ENCODE measurements at regions of chr10 and their contacts with region 1.

Region 1: GRCh38 chr10:89563861-89564478 is 28.6 kb upstream of the SLC16A12 start:
- DNase-seq: no peak
- H3K4me3 ChIP-seq: no peak overlapping the region
- H3K27ac ChIP-seq: no peak overlapping the region
- H3K4me1 ChIP-seq: no peaks in the 10 kb centered on the region
- H3K27me3 ChIP-seq: no peaks in the 10 kb centered on the region
- CTCF ChIP-seq: peak; percentile 78 to 82

Region 2: GRCh38 chr10:89426230-89426868 is 137.6 kb before region 1 on chr10:
- intact Hi-C with region 1: loop called (anchors 1 kb)
- DNase-seq: no peak
- H3K4me3 ChIP-seq: no peak overlapping the region
- H3K27ac ChIP-seq: no peak overlapping the region
- H3K4me1 ChIP-seq: no peaks in the 10 kb centered on the region
- H3K27me3 ChIP-seq: no peaks in the 10 kb centered on the region
- CTCF ChIP-seq: peak; percentile 87 to 91

Measured in tibial artery (tissue), 4 donors.